Activated CD8-positive, alpha-beta T cell treated with anti-CD3 and anti-CD28 coated beads for 36 hours (primary cell): ENCODE measurements at regions of chr11 and their contacts with region 1.

Region 1: DNA sequence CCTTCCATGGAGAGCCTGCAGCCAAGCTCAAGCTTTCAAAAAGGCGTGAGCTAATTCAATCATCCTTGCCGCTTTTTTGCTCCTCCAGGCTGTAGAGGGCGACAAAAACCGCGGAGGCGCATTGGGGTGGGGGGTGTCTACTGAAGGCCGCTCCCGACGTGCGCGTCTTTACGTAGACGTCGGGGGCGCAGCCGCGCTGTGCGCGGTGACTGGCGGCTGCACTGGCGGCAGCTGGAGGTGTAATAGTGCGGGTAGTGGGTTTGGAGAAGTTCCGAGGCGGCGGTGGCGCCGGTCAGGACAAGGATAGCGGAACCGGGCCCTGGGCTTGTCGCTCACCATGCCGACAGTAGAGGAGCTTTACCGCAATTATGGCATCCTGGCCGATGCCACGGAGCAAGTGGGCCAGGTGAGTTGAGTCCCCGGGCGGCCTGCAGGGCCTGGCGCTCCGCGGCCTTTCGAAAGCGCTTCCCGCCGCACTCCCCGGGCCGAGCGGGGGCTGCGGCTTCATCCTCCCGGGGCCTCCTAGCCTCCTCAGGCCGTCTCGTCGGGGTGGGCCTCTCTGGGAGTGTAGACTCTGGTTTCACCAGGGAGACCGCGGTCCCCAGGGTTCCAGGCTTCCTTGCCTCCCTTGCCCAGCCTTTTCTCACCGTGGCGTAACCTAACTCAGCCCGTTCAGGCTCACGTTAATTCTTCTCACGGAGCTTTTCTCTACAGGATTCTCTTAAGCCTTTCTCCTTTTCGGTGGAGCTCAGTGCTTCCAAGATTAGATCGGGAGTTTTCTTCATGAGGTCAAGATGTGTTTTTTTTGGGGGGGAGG is at the start of gene API5:
- DNase-seq: peak; percentile 95
- ATAC-seq: peak; percentile 96
- H3K4me3 Mint-ChIP-seq: peak within 1 kb of the TSS; percentile 99
- H3K27ac Mint-ChIP-seq: peak within 1 kb of the TSS; percentile 96
- H3K4me1 Mint-ChIP-seq: peaks cover 43% of the 10 kb centered on the region
- H3K27me3 Mint-ChIP-seq: no peaks in the 10 kb centered on the region
- CTCF ChIP-seq: peak; percentile 62
- total RNA-seq, gene API5: 156 to 169 TPM

Region 2: DNA sequence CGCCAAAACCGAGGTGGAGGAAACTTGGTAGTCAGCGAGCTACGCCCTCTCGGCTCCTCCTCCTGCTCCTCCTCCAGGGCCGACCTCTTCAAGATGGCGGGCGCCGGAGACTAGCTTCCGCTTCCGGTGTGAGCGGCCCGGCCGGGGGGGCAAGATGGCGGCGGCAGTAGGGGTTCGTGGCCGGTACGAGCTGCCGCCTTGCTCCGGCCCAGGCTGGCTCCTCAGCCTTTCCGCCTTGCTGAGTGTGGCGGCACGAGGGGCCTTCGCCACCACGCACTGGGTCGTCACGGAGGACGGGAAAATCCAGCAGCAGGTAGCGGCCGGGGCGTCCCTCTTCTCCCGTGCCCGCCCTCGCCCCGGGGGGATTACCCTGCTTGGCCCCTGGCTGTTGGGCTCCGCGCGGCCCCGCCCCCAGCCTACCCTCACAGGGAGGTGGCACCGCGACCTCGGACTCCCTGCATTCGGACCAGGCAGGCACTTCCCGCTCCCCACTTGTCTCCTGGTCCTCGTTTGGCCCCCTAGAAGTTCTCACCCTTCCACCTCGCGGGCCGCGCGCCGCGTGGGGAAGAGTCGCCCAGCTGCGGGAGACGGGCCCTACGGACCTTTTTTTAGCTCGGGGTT is 46.9 kb after region 1 on chr11 and contains the start of gene TTC17:
- CTCF ChIA-PET with region 1: interaction called, 23 read pairs
- POLR2A ChIA-PET with region 1: interaction called, 20 read pairs
- intact Hi-C with region 1: no loop called
- DNase-seq: peak; percentile 96
- ATAC-seq: peak; percentile 96
- H3K4me3 Mint-ChIP-seq: peak within 1 kb of the TSS; percentile 99
- H3K27ac Mint-ChIP-seq: peak within 1 kb of the TSS; percentile 98
- H3K4me1 Mint-ChIP-seq: peaks cover 38% of the 10 kb centered on the region
- H3K27me3 Mint-ChIP-seq: no peaks in the 10 kb centered on the region
- CTCF ChIP-seq: no peak
- total RNA-seq, gene TTC17: 48.7 to 51.2 TPM

Region 3: GRCh38 chr11:43393765-43394355 is 81.9 kb after region 1 on chr11:
- CTCF ChIA-PET with region 1: no interaction called
- POLR2A ChIA-PET with region 1: no interaction called
- intact Hi-C with region 1: loop called (anchors 10 kb)
- DNase-seq: no peak
- ATAC-seq: no peak
- H3K4me3 Mint-ChIP-seq: no peak overlapping the region
- H3K27ac Mint-ChIP-seq: peak overlapping the region; percentile 11
- H3K4me1 Mint-ChIP-seq: peaks cover 40% of the 10 kb centered on the region
- H3K27me3 Mint-ChIP-seq: no peaks in the 10 kb centered on the region
- CTCF ChIP-seq: no peak

Region 4: DNA sequence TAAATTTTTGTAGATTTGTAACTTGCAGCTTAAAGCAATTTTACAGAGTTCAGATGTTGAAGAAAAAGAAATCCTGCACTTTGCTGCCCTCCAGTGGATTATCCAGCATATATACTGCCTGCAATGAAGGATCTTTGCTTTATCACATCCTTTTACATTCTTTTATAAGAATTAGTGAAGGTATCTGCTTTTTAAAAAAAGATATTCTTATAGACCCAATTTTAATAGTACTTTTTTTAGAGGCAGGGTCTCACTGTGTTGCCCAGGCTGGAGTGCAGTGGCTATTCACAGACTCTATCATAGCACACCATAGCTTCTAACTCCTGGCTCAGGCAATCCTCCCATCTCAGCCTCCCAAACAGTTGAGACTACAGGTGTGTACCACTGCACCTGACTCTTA is 107.5 kb after region 1 on chr11:
- CTCF ChIA-PET with region 1: interaction called, 17 read pairs
- POLR2A ChIA-PET with region 1: no interaction called
- intact Hi-C with region 1: no loop called
- DNase-seq: peak; percentile 59
- ATAC-seq: peak; percentile 62
- H3K4me3 Mint-ChIP-seq: no peak overlapping the region
- H3K27ac Mint-ChIP-seq: no peak overlapping the region
- H3K4me1 Mint-ChIP-seq: peaks cover 2% of the 10 kb centered on the region
- H3K27me3 Mint-ChIP-seq: no peaks in the 10 kb centered on the region
- CTCF ChIP-seq: peak; percentile 68